Left cardiac atrium (tissue), 4 donors: ENCODE measurements at regions of chr2 and their contacts with region 1.

Region 1: GRCh38 chr2:55771612-55772011 is 78.0 kb upstream of the PNPT1 start:
- DNase-seq: no peak
- ATAC-seq: peak in 1 of 2 donors; percentile 51

Region 2: GRCh38 chr2:55693181-55694134 is 78.2 kb before region 1 on chr2 and contains the start of gene PNPT1:
- intact Hi-C with region 1: no loop called
- DNase-seq: peak; percentile 96
- ATAC-seq: peak; percentile 100
- total RNA-seq, gene PNPT1: 16.4 to 20.5 TPM

Region 3: DNA sequence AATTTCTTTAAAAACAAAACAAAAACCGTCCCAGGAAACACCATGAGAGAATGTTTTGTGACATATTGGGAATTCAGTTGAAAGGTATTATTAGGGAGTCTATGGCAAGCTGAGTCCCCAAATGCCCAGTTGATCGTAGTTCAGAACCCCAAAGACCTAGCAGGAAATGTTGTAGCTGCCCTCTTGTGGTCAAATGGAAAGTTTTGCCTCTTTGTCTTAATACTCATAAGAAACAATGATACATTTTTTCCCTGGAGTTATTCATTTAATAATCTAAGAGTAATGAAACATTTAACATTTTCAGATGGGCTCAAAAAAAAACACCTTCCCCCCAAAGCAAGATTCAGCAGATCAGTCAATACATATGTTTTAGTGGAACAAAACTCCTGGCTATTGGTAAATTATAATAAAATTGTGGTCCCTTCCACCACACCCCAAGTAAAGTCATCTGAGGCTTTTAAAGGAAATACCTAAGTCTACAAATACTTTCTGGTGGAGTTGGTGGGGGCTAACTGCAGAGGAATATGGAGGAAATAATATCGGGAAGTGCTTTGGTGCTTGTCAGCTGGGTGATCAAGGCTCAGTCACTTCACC is 189.8 kb after region 1 on chr2:
- intact Hi-C with region 1: loop called (anchors 2 to 10 kb)
- DNase-seq: no peak
- ATAC-seq: peak in 1 of 2 donors; percentile 50